Activated CD4-positive, alpha-beta T cell treated with anti-CD3 and anti-CD28 coated beads, Interleukin-2, amount 10 ng/mL, durations not matched to agents 24 days and 14 days (primary cell): ENCODE measurements at regions of chr1 and their contacts with region 1.

Region 1: GRCh38 chr1:198520524-198521254 is 19.8 kb downstream of the ATP6V1G3 start:
- DNase-seq: peak; percentile 69
- H3K4me3 Mint-ChIP-seq: peak overlapping the region; percentile 59
- H3K27ac Mint-ChIP-seq: peak overlapping the region; percentile 78
- H3K4me1 Mint-ChIP-seq: peaks cover 53% of the 10 kb centered on the region
- H3K27me3 Mint-ChIP-seq: no peaks in the 10 kb centered on the region

Region 2: DNA sequence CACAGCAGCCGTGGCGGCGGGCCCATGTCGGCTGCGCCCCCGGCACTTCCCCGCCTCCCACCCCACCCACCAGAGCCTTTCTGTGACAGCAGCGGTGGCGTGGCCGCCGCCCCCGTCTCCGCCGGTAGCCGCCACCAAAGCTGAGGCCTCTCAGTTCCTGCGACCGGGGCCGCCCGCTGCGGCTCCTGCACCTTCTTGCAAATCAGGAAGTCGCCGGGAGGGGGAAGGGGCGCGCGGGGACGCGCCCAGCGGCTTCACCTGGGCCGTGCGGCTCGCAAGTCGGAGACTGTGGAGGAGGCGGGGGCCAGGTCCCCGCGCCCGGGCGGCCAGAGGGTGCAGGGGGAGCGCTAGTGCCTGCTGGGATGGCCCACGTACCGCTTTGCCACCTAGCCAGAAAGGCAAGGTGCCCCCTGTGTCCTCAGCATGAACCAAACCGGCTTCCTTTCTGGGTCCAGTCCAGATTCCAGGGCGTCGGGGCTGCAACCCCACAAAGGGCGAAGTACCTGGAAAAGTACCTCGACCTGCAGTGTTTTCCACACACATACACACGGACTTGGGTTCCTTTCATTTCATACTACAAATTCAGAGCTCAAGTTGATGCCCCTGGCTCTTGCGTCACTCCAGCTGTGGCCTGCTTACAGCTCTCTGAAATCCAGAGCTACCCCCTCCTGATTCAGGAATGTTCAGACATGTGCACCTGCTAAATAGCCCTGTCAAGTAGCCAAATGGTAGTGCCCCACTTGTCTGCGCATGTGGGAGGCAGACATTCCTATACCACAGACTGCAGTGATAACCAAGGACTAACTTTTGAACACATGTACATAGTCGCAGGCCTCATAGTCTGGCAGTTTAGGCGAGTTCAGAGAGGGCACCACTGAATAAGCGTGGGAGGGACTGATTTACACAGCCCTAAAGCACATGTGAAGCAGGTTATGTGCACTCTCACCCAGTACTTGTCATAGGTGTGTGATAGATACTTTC is 745.1 kb before region 1 on chr1 and contains the start of gene DENND1B:
- intact Hi-C with region 1: loop called (anchors 1 kb)
- DNase-seq: peak; percentile 95
- H3K4me3 Mint-ChIP-seq: peak within 1 kb of the TSS; percentile 89
- H3K27ac Mint-ChIP-seq: peak within 1 kb of the TSS; percentile 99
- H3K4me1 Mint-ChIP-seq: peaks cover 61% of the 10 kb centered on the region
- H3K27me3 Mint-ChIP-seq: no peaks in the 10 kb centered on the region
- total RNA-seq, gene DENND1B: 15.0 and 16.8 TPM in 2 replicates

Region 3: DNA sequence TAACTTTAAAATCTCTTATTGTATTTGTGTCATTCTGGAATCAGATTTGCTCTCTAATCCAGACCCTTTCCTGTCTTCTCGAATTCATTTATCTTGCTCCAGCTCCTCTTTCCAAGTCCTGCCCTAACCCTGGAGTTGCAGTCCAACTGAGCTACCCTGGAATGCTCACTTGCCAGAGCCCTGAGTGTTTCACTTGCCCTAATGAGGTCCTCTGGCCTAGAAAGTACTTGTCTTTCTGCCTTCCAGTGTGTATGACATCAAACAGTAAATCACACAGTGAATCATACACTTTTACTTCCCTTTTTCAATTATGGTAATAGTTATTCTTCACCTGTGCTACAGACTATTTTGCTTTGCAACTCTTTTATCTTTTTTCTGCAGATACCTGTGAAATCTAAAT is 267.0 kb before region 1 on chr1:
- intact Hi-C with region 1: loop called (anchors 10 kb)
- DNase-seq: peak; percentile 58
- H3K4me3 Mint-ChIP-seq: peak overlapping the region; percentile 21
- H3K27ac Mint-ChIP-seq: peak overlapping the region; percentile 83
- H3K4me1 Mint-ChIP-seq: peaks cover 29% of the 10 kb centered on the region
- H3K27me3 Mint-ChIP-seq: no peaks in the 10 kb centered on the region

Region 4: GRCh38 chr1:198481661-198482060 is 39.0 kb before region 1 on chr1:
- intact Hi-C with region 1: no loop called
- DNase-seq: no peak
- H3K4me3 Mint-ChIP-seq: no peak overlapping the region
- H3K27ac Mint-ChIP-seq: no peak overlapping the region
- H3K4me1 Mint-ChIP-seq: no peaks in the 10 kb centered on the region
- H3K27me3 Mint-ChIP-seq: peaks cover 6% of the 10 kb centered on the region

Region 5: DNA sequence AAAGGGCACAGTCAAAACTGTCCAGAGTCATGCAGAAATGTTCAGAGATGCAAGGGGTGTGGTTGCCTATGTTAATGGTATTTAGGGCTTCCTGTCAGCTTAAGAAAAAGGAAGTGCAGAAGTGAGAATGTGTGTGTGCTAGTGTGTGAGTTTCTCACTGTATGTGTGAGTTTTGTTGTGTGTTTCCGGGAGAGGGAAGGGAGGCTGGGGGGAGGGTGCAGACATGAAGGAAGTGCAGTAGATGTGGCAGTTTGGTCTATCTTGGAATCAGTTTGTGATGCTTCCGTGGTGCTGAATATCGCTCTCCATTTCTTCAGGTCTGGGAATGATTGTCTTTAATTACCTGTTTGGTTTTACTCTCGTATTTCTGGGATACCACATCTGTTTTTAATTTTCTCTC is 36.3 kb after region 1 on chr1:
- intact Hi-C with region 1: loop called (anchors 1 kb)
- DNase-seq: peak; percentile 86
- H3K4me3 Mint-ChIP-seq: peak overlapping the region; percentile 69
- H3K27ac Mint-ChIP-seq: peak overlapping the region; percentile 31
- H3K4me1 Mint-ChIP-seq: peaks cover 36% of the 10 kb centered on the region
- H3K27me3 Mint-ChIP-seq: peaks cover 1% of the 10 kb centered on the region

Region 6: DNA sequence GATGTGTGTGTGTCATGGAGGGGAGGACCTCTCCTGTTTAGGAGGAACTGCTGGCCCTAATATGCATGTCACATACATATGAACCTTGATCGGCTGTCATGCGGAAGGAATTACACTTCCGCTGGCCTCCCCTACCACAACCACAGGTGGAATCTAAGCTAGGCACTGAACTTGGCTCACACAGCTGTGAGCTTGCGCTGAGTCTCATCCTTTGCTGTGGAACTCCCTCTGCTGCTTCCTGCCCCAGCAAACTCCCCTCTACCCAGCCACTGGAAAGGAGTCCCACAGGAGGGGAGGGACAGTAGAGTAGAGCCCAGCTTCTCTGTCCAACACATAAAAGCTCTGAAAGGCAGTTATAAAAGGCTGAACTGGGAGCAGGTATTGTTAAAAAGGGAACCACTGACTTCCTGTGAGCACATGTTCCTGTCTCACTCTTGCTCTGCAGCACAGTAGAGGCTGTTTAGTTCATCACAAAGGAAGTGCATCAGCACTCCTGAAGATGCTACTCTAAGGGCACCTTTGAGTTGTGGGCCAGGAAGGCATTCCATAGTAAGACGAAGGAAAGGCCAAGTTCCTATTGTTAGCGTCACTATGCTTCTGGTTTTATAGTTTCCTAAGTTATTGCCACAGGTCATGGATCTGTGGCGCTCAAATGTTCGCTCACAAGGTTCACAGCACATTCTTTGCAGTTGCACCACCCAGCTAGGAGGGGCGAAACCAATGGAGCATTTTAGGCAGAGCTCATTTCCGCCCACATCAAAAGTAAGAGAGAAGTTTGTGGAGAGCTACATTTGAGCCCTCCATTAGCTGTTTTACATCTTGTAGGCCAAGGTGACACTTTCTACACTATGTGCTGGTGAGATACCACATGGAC is 100.5 kb after region 1 on chr1:
- intact Hi-C with region 1: loop called (anchors 1 kb)
- DNase-seq: peak; percentile 92
- H3K4me3 Mint-ChIP-seq: peak overlapping the region; percentile 85
- H3K27ac Mint-ChIP-seq: peak overlapping the region; percentile 99
- H3K4me1 Mint-ChIP-seq: peaks cover 64% of the 10 kb centered on the region
- H3K27me3 Mint-ChIP-seq: no peaks in the 10 kb centered on the region

Region 7: GRCh38 chr1:198657550-198658064 is 136.9 kb after region 1 on chr1:
- intact Hi-C with region 1: loop called (anchors 1 kb)
- DNase-seq: peak; percentile 77
- H3K4me3 Mint-ChIP-seq: peak overlapping the region; percentile 92
- H3K27ac Mint-ChIP-seq: peak overlapping the region; percentile 86
- H3K4me1 Mint-ChIP-seq: peaks cover 43% of the 10 kb centered on the region
- H3K27me3 Mint-ChIP-seq: no peaks in the 10 kb centered on the region

Region 8: GRCh38 chr1:198713081-198713480 is 192.4 kb after region 1 on chr1:
- intact Hi-C with region 1: no loop called
- DNase-seq: no peak
- H3K4me3 Mint-ChIP-seq: no peak overlapping the region
- H3K27ac Mint-ChIP-seq: peak overlapping the region; percentile 87
- H3K4me1 Mint-ChIP-seq: peaks cover 15% of the 10 kb centered on the region
- H3K27me3 Mint-ChIP-seq: no peaks in the 10 kb centered on the region

Region 9: GRCh38 chr1:198734323-198735008 is 213.8 kb after region 1 on chr1:
- intact Hi-C with region 1: loop called (anchors 5 kb)
- DNase-seq: no peak
- H3K4me3 Mint-ChIP-seq: peak overlapping the region; percentile 41
- H3K27ac Mint-ChIP-seq: peak overlapping the region; percentile 90
- H3K4me1 Mint-ChIP-seq: peaks cover 50% of the 10 kb centered on the region
- H3K27me3 Mint-ChIP-seq: no peaks in the 10 kb centered on the region